ENCODE measurements at regions of chr1 and their contacts with region 1.

Region 1: DNA sequence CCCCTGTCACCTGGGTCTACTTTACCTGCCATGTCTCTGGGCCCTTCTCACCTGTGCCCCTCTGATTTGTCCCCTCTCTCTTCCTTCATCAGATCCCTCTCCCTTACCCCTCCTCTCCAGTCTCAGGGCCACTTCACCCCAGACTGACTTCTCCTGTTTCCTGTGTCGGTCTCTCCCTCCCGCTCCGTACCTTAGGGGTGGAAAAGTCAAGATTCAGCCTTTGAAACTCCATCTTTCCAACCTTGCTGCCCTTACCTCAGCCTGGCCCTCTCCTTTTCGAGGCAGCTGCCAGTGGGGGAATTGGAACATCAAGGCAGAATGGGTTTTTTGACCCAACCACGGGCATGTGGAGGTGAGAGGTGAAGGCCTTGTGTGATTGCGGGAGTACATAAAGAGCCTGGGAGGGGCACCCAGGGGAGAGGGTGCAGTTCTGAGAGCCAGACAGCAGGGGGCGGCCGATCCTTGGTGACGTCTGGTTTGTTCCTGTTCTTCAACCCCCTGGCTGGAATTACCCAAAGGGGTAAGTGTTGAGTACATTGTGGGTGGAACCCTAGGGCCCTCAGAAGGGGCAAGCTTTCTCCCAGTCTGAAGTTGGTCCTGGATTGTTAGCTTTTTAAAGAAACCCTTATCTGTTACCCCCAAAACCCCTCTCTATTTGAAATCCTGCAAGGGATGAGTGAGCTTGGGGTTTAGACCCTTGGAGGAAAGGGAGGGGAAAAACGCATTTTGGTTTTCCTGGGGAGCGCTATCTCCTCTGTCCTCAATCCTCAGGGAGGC is 12.3 kb upstream of the DMBX1 start:
- DNase-seq: peak; percentile 91
- H3K4me3 ChIP-seq: no peak overlapping the region; a peak in 1 of 4 replicates
- H3K27ac ChIP-seq: no peak overlapping the region
- H3K4me1 ChIP-seq: peaks cover 0 to 9% of the 10 kb centered on the region in 2 experiments; a peak in 1 of 4 replicates
- H3K27me3 ChIP-seq: no peaks in the 10 kb centered on the region
- CTCF ChIP-seq: peak; percentile 93
- EP300 ChIP-seq: no peak
- RAD21 ChIP-seq: peak; percentile 80

Region 2: GRCh38 chr1:46448109-46448911 is 29.0 kb before region 1 on chr1:
- CTCF ChIA-PET with region 1: interaction called, 79 read pairs
- POLR2A ChIA-PET with region 1: no interaction called
- DNase-seq: peak; percentile 77
- H3K4me3 ChIP-seq: peak overlapping the region in 1 of 2 experiments; percentile 12; a peak in 1 of 4 replicates
- H3K27ac ChIP-seq: no peak overlapping the region
- H3K4me1 ChIP-seq: peaks cover 0 to 10% of the 10 kb centered on the region in 2 experiments; a peak in 1 of 4 replicates
- H3K27me3 ChIP-seq: peaks cover 17% of the 10 kb centered on the region; the same call in 1 of the 2 replicates
- CTCF ChIP-seq: no peak
- EP300 ChIP-seq: no peak
- RAD21 ChIP-seq: no peak

Region 3: GRCh38 chr1:46456411-46456963 is 20.9 kb before region 1 on chr1:
- CTCF ChIA-PET with region 1: interaction called, 14 read pairs
- POLR2A ChIA-PET with region 1: no interaction called
- DNase-seq: no peak
- H3K4me3 ChIP-seq: no peak overlapping the region
- H3K27ac ChIP-seq: no peak overlapping the region
- H3K4me1 ChIP-seq: no peaks in the 10 kb centered on the region; a peak in 1 of 4 replicates
- H3K27me3 ChIP-seq: no peaks in the 10 kb centered on the region
- CTCF ChIP-seq: no peak
- EP300 ChIP-seq: no peak
- RAD21 ChIP-seq: no peak

Region 4: DNA sequence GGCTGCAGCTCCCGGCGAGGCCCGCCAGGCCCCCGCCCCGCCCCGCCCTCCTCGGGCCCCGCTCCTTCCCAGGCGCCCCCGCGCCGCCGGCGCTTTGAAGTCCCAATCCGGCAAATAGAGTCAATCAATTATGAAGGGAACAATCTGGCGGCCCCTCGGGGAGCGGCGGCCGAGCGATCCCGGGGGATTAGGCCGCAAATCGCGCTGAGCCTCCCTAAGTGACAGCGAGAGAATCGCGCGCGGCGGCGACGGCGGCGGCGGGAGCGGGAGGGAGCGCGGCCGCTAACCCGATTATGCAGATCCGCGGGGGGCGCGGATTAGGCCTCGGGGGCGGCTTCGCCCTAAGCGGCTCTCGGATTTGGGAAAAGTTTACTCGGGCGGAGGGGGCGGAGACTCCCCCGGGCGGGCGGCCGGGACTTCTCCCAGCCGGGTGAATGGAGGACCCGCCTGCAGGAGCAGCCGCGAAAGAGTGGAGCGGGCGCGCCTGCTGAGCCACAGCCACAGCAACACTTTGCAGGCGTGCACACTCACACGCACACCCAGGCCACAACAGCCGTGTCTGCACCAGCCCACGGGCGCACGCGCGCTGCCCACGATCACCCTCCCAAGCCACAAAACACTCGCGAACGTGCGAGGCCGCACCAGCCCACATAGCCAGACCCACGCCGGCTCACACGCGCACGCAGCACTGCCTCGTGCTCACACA is 10.7 kb before region 1 on chr1:
- CTCF ChIA-PET with region 1: interaction called, 17 read pairs
- POLR2A ChIA-PET with region 1: no interaction called
- DNase-seq: peak; percentile 81
- H3K4me3 ChIP-seq: peak overlapping the region; percentile 43 to 56
- H3K27ac ChIP-seq: no peak overlapping the region
- H3K4me1 ChIP-seq: peaks cover 0 to 14% of the 10 kb centered on the region in 2 experiments; a peak in 1 of 4 replicates
- H3K27me3 ChIP-seq: no peaks in the 10 kb centered on the region
- CTCF ChIP-seq: no peak
- EP300 ChIP-seq: no peak
- RAD21 ChIP-seq: no peak

Region 5: GRCh38 chr1:46489638-46490405 is 12.5 kb after region 1 on chr1 and contains the start of gene DMBX1:
- CTCF ChIA-PET with region 1: interaction called, 43 read pairs
- POLR2A ChIA-PET with region 1: no interaction called
- DNase-seq: peak; percentile 86
- H3K4me3 ChIP-seq: peak within 1 kb of the TSS; percentile 31 to 47; a peak in 3 of 4 replicates
- H3K27ac ChIP-seq: no peak within 1 kb of the TSS
- H3K4me1 ChIP-seq: peaks cover 0 to 5% of the 10 kb centered on the region in 2 experiments; a peak in 1 of 4 replicates
- H3K27me3 ChIP-seq: peaks cover 59% of the 10 kb centered on the region
- CTCF ChIP-seq: no peak
- EP300 ChIP-seq: no peak
- RAD21 ChIP-seq: no peak
- polyA plus RNA-seq, gene DMBX1: not detected in 2 replicates

Region 6: GRCh38 chr1:46508757-46509156 is 31.4 kb after region 1 on chr1:
- CTCF ChIA-PET with region 1: interaction called, 13 read pairs
- POLR2A ChIA-PET with region 1: no interaction called
- DNase-seq: no peak
- H3K4me3 ChIP-seq: no peak overlapping the region
- H3K27ac ChIP-seq: no peak overlapping the region
- H3K4me1 ChIP-seq: no peaks in the 10 kb centered on the region
- H3K27me3 ChIP-seq: no peaks in the 10 kb centered on the region
- CTCF ChIP-seq: no peak
- EP300 ChIP-seq: no peak
- RAD21 ChIP-seq: no peak

Region 7: GRCh38 chr1:46522184-46522968 is 45.0 kb after region 1 on chr1:
- CTCF ChIA-PET with region 1: interaction called, 158 read pairs
- POLR2A ChIA-PET with region 1: no interaction called
- DNase-seq: no peak
- H3K4me3 ChIP-seq: no peak overlapping the region
- H3K27ac ChIP-seq: peak overlapping the region in 1 of 2 experiments; percentile 49; a peak in 2 of 4 replicates
- H3K4me1 ChIP-seq: peaks cover 4 to 39% of the 10 kb centered on the region in 2 experiments; a peak in 3 of 4 replicates
- H3K27me3 ChIP-seq: no peaks in the 10 kb centered on the region
- CTCF ChIP-seq: no peak
- EP300 ChIP-seq: no peak
- RAD21 ChIP-seq: no peak

Region 8: GRCh38 chr1:46603858-46604549 is 126.7 kb after region 1 on chr1 and contains the start of gene MKNK1:
- CTCF ChIA-PET with region 1: no interaction called
- POLR2A ChIA-PET with region 1: no interaction called
- DNase-seq: peak; percentile 100
- H3K4me3 ChIP-seq: peak within 1 kb of the TSS; percentile 78 to 99
- H3K27ac ChIP-seq: peak within 1 kb of the TSS in 1 of 2 experiments; percentile 67; a peak in 1 of 4 replicates
- H3K4me1 ChIP-seq: peaks cover 0 to 12% of the 10 kb centered on the region in 2 experiments; a peak in 1 of 4 replicates
- H3K27me3 ChIP-seq: no peaks in the 10 kb centered on the region
- CTCF ChIP-seq: peak; percentile 37
- EP300 ChIP-seq: no peak
- RAD21 ChIP-seq: no peak
- polyA plus RNA-seq, gene MKNK1: 28.2 and 29.6 TPM in 2 replicates

Region 9: DNA sequence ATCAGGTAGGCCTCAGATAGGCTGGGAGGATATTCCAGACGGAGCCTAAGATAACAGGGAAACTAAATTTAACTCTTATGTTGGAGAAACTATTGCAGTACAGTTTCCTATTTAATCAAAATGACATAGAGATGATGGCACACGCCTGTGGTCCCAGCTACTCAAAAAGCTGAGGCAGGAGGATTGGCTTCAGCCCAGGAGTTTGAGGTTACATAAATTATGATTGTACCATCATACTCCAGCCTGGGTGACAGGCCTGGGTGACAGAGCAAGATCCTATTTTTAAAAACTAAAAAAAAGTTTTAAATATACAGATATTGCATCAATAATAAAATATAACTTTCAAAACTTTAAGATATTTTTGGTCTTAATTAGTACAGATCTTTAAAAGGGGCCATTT is 779.9 kb after region 1 on chr1:
- CTCF ChIA-PET with region 1: no interaction called
- POLR2A ChIA-PET with region 1: no interaction called
- DNase-seq: no peak
- H3K4me3 ChIP-seq: no peak overlapping the region
- H3K27ac ChIP-seq: no peak overlapping the region
- H3K4me1 ChIP-seq: no peaks in the 10 kb centered on the region
- H3K27me3 ChIP-seq: no peaks in the 10 kb centered on the region
- CTCF ChIP-seq: no peak
- EP300 ChIP-seq: no peak
- RAD21 ChIP-seq: no peak